Dorsolateral prefrontal cortex (tissue), 120 donors: ENCODE measurements at regions of chr2 and their contacts with region 1.

Region 1: DNA sequence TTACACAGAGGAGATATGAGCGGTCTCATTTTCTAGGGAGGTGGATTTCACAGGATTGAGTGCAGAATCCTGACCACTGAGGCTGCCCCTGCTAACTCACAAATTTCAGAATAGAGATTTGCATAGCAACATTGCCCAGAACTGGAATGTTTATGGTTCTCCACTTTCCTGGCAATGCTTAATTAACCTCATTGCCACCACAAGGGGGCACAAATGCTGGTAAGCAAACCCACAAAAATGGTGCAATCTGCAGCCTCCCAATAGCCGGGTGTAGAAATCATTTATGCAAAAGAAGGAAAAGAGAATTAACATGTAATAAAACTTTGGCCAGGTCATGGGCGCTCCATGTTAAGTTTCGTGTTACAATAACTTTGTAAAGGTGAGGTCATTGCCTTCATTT is 112.4 kb downstream of the CYRIA start:
- DNase-seq: peak in 5 of 10 donors; percentile 24 to 62 (median 35)
- H3K4me3 ChIP-seq: no peak overlapping the region
- H3K27ac ChIP-seq: peak overlapping the region in 9 of 59 donors; percentile 2 to 55 (median 22)
- H3K27me3 ChIP-seq: no peaks in the 10 kb centered on the region
- CTCF ChIP-seq: peak; percentile 47 to 89 (median 72)

Region 2: GRCh38 chr2:16608661-16609643 is 55.7 kb after region 1 on chr2:
- intact Hi-C with region 1: loop called (anchors 1 to 5 kb)
- DNase-seq: peak; percentile 81 to 93 (median 90)
- H3K4me3 ChIP-seq: peak overlapping the region; percentile 32 to 74 (median 54)
- H3K27ac ChIP-seq: peak overlapping the region; percentile 18 to 91 (median 83)
- H3K27me3 ChIP-seq: no peaks in the 10 kb centered on the region
- CTCF ChIP-seq: peak; percentile 81 to 99 (median 93)

Region 3: GRCh38 chr2:16756831-16757644 is 203.8 kb after region 1 on chr2:
- intact Hi-C with region 1: loop called (anchors 2 kb)
- DNase-seq: peak; percentile 74 to 91 (median 86)
- H3K4me3 ChIP-seq: peak overlapping the region in 1 of 59 donors; percentile 37
- H3K27ac ChIP-seq: peak overlapping the region in 34 of 59 donors; percentile 13 to 77 (median 56)
- H3K27me3 ChIP-seq: no peaks in the 10 kb centered on the region
- CTCF ChIP-seq: peak; percentile 88 to 98 (median 94)